ENCODE measurements at regions of chr6 and their contacts with region 1.

Region 1: DNA sequence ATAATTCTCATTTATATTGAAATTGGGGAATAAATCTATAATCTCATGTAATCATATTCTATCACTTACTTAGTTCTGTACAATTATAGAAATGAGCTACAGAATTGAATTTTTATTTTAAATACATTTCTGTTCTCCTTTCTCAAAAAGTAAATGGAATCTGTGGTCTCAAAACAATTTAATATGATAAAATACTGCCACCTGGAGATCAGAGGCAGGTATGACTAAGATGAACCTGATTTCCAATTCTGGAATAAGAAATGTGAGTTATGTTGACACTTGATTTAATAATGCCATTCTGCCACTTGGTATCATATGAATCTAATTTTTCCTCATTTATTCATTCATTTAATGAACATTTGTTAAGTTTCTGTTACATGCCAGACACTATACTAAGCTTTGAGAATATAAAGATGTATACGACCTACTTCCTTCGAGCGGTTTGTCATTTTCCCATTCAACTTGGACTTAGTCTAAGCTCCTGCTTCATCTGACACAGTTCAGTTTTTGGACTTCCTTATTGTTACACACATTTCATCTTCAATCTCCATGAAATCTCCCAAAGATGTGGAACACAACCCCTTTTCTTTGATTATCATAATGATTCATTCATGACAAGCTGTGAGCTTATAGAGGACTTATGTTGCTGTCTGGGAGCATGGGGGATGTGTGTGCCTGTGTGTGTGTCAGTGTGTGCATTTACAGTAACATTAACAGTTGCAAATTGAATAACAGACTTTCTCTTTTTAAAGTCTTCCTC is 7.5 kb upstream of the CCDC28A start:
- DNase-seq: no peak

Region 2: GRCh38 chr6:138588805-138589434 is 177.2 kb before region 1 on chr6:
- intact Hi-C with region 1: loop called (anchors 10 kb)
- DNase-seq: no peak

Region 3: GRCh38 chr6:138805016-138805765 is 39.1 kb after region 1 on chr6:
- intact Hi-C with region 1: no loop called
- DNase-seq: no peak

Measured in posterior vena cava (tissue), 2 donors.